Motor neuron (in vitro differentiated cells): ENCODE measurements at regions of chr3 and their contacts with region 1.

Region 1: DNA sequence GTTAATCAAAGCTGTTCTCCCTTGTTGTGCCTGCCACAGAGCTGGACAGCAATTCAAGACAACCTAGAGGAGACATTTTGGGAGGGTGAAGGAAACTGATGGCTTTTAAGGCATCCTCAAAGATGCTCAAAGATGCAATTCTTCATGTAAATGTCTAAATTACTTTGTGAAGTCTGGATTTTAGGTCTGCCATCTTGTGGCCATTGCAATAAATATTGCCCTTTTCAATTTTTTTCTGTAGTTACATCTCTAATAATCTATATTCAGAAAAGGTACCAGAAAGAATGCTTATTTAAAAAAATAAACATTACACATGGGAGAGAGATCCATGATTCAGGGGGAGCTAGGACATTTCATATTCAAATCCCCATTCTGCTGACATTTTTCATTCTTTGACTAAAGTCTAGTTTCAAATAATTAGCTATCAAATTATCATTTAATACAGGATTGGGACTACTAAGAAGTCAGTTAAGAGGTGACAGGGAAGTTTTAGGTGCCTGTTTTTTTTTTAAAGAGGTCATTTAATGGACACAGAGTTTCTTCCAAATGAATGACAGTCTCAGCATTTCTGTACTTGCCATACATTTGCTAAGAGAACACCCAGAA is 259.8 kb upstream of the WNT5A start:
- ATAC-seq: no peak
- H3K4me3 ChIP-seq: no peak overlapping the region
- H3K27ac ChIP-seq: no peak overlapping the region
- H3K4me1 ChIP-seq: peaks cover 0 to 5% of the 10 kb centered on the region in 2 donors

Region 2: GRCh38 chr3:56042326-56042951 is 295.5 kb after region 1 on chr3:
- in situ Hi-C with region 1: loop called in 1 of 9 experiments (anchors 25 kb)
- ATAC-seq: peak; percentile 52 to 99 (median 76)
- H3K4me3 ChIP-seq: no peak overlapping the region
- H3K27ac ChIP-seq: no peak overlapping the region
- H3K4me1 ChIP-seq: no peaks in the 10 kb centered on the region

Region 3: GRCh38 chr3:56076746-56077145 is 329.8 kb after region 1 on chr3:
- in situ Hi-C with region 1: no loop called
- ATAC-seq: no peak
- H3K4me3 ChIP-seq: no peak overlapping the region
- H3K27ac ChIP-seq: no peak overlapping the region
- H3K4me1 ChIP-seq: peaks cover 0 to 2% of the 10 kb centered on the region in 2 donors

Region 4: DNA sequence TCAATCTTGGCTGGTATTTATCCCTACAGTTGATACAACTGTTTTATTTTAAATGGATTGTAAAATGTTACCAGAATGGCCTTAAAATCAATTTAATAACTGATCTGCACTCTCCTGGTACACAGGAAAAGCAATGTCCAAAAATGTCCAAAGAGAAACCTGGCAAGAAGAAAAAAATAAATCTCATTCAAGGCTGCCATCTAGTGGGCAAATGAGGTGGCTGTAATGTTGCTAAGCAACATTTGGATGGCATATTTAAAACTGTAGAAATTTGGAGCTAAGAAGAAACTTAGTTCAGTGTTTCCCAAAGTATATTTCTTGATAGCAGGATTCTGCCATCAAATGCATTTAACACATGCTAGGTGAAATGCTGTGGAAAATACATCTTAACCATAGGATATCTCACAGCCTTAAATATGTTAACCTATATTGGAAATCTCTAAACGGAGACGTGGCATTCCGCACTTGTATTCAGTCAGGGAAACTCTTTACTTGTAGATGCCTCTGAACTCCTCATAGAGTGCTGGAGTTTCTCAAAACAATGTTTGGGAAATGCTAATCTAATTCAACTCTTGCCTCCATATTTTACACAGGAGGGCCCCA is 504.5 kb after region 1 on chr3:
- in situ Hi-C with region 1: loop called in 1 of 9 experiments (anchors 25 kb)
- ATAC-seq: peak in 6 of 8 experiments; percentile 23 to 73 (median 52)
- H3K4me3 ChIP-seq: no peak overlapping the region
- H3K27ac ChIP-seq: no peak overlapping the region
- H3K4me1 ChIP-seq: no peaks in the 10 kb centered on the region